CD14-positive monocyte (primary cell): ENCODE measurements at regions of chr4 and their contacts with region 1.

Region 1: GRCh38 chr4:183261953-183262775 is 57.9 kb downstream of the CLDN22 start:
- DNase-seq: peak; percentile 61 to 73 (median 70)
- H3K4me3 ChIP-seq: no peak overlapping the region
- H3K4me3 Mint-ChIP-seq: no peak overlapping the region
- H3K27ac ChIP-seq: no peak overlapping the region
- H3K27ac Mint-ChIP-seq: peak overlapping the region in 2 of 7 donors; percentile 13 to 22
- H3K4me1 ChIP-seq: no peaks in the 10 kb centered on the region
- H3K4me1 Mint-ChIP-seq: peaks cover 5% of the 10 kb centered on the region
- H3K27me3 ChIP-seq: no peaks in the 10 kb centered on the region
- H3K27me3 Mint-ChIP-seq: no peaks in the 10 kb centered on the region
- CTCF ChIP-seq: peak; percentile 75

Region 2: DNA sequence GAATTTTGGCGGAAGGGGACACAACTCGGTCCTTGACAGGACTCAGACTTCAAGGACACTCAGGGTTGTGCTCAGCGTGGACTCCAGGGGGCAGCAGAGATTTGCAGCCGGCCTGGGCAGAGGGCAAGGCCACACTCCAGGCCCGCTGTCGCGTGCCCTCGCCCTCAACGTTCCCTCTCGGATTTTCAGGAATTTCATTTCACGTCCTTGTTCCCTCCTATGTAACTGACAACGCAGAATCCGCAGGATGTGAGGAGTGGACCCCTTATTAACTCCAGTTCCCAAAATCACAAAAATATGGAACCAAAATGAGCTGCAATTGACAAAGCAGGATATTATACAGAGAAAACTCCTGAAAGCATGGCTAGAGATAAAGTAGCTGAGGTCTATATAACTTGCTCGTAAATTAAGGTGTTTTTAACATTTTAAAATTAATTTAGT is 323.9 kb before region 1 on chr4:
- intact Hi-C with region 1: loop called (anchors 5 kb)
- DNase-seq: peak; percentile 35 to 57 (median 48)
- H3K4me3 ChIP-seq: no peak overlapping the region
- H3K4me3 Mint-ChIP-seq: peak overlapping the region in 1 of 2 donors; percentile 36
- H3K27ac ChIP-seq: no peak overlapping the region
- H3K27ac Mint-ChIP-seq: no peak overlapping the region
- H3K4me1 ChIP-seq: no peaks in the 10 kb centered on the region
- H3K4me1 Mint-ChIP-seq: peaks cover 6% of the 10 kb centered on the region
- H3K27me3 ChIP-seq: no peaks in the 10 kb centered on the region
- H3K27me3 Mint-ChIP-seq: peaks cover 0 to 5% (median 2%) of the 10 kb centered on the region in 3 donors
- CTCF ChIP-seq: peak; percentile 92

Region 3: GRCh38 chr4:183074296-183074990 is 187.7 kb before region 1 on chr4:
- intact Hi-C with region 1: loop called (anchors 1 to 2 kb)
- DNase-seq: no peak
- H3K4me3 ChIP-seq: no peak overlapping the region
- H3K4me3 Mint-ChIP-seq: no peak overlapping the region
- H3K27ac ChIP-seq: no peak overlapping the region
- H3K27ac Mint-ChIP-seq: no peak overlapping the region
- H3K4me1 ChIP-seq: no peaks in the 10 kb centered on the region
- H3K4me1 Mint-ChIP-seq: peaks cover 2% of the 10 kb centered on the region
- H3K27me3 ChIP-seq: no peaks in the 10 kb centered on the region
- H3K27me3 Mint-ChIP-seq: peaks cover 2 to 10% (median 7%) of the 10 kb centered on the region in 3 donors
- CTCF ChIP-seq: no peak

Region 4: GRCh38 chr4:183106839-183107238 is 155.3 kb before region 1 on chr4:
- intact Hi-C with region 1: no loop called
- DNase-seq: no peak
- H3K4me3 ChIP-seq: no peak overlapping the region
- H3K4me3 Mint-ChIP-seq: peak overlapping the region in 1 of 2 donors; percentile 33
- H3K27ac ChIP-seq: no peak overlapping the region
- H3K27ac Mint-ChIP-seq: no peak overlapping the region
- H3K4me1 ChIP-seq: no peaks in the 10 kb centered on the region
- H3K4me1 Mint-ChIP-seq: no peaks in the 10 kb centered on the region
- H3K27me3 ChIP-seq: peaks cover 0 to 10% of the 10 kb centered on the region in 2 donors
- H3K27me3 Mint-ChIP-seq: peaks cover 5 to 14% (median 12%) of the 10 kb centered on the region in 3 donors
- CTCF ChIP-seq: no peak

Region 5: GRCh38 chr4:183335369-183335940 is 73.3 kb after region 1 on chr4:
- intact Hi-C with region 1: no loop called
- DNase-seq: peak in 1 of 3 donors; percentile 24
- H3K4me3 ChIP-seq: no peak overlapping the region
- H3K4me3 Mint-ChIP-seq: no peak overlapping the region
- H3K27ac ChIP-seq: no peak overlapping the region
- H3K27ac Mint-ChIP-seq: no peak overlapping the region
- H3K4me1 ChIP-seq: no peaks in the 10 kb centered on the region
- H3K4me1 Mint-ChIP-seq: peaks cover 2% of the 10 kb centered on the region
- H3K27me3 ChIP-seq: no peaks in the 10 kb centered on the region
- H3K27me3 Mint-ChIP-seq: peaks cover 2 to 9% (median 5%) of the 10 kb centered on the region in 3 donors
- CTCF ChIP-seq: no peak